ENCODE measurements at regions of chr2 and their contacts with region 1.

Region 1: GRCh38 chr2:38750891-38751595 is at the start of gene SRSF7:
- DNase-seq: peak; percentile 91 to 99 (median 95)
- ATAC-seq: peak; percentile 86
- H3K4me3 ChIP-seq: peak within 1 kb of the TSS; percentile 82
- H3K27ac ChIP-seq: peak within 1 kb of the TSS; percentile 99
- H3K4me1 ChIP-seq: peaks cover 0 to 29% of the 10 kb centered on the region in 2 experiments; a peak in 3 of 5 replicates
- H3K27me3 ChIP-seq: no peaks in the 10 kb centered on the region
- CTCF ChIP-seq: no peak
- EP300 ChIP-seq: peak; percentile 25
- POLR2A ChIP-seq: peak; percentile 100
- RAD21 ChIP-seq: peak in 1 of 2 experiments; percentile 16; a peak in 2 of 4 replicates
- polyA plus RNA-seq, gene SRSF7: 696 to 706 TPM

Region 2: DNA sequence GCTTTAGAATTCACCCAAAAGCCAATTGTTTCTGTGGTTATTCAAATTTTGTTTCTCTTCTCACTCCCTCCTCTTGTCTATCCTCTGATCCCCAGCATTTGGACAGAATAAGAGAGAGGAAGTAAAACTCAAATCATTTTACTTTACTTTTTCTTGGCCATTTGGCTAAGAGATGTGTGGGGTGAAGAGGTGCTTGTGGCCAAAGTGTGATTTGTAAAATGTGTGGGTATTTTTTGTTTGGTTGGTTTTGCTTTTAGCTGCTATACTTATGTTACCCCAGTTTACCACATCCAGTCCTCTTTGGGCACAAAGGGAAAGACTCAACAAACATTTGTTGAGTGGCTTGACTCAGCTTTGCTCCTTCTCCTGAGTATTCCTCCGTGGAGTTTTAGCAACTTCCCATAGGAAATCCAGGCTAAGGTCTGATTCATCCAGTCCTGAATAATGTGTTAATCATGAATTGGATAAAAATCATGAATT is 566.0 kb before region 1 on chr2:
- CTCF ChIA-PET with region 1: no interaction called
- POLR2A ChIA-PET with region 1: no interaction called
- in situ Hi-C with region 1: no loop called
- intact Hi-C with region 1: no loop called
- DNase-seq: no peak
- ATAC-seq: no peak
- H3K4me3 ChIP-seq: no peak overlapping the region
- H3K27ac ChIP-seq: no peak overlapping the region
- H3K4me1 ChIP-seq: no peaks in the 10 kb centered on the region
- H3K27me3 ChIP-seq: peaks cover 3 to 17% of the 10 kb centered on the region in 2 experiments; a peak in 4 of 5 replicates
- CTCF ChIP-seq: no peak
- EP300 ChIP-seq: no peak
- POLR2A ChIP-seq: no peak
- RAD21 ChIP-seq: no peak

Region 3: DNA sequence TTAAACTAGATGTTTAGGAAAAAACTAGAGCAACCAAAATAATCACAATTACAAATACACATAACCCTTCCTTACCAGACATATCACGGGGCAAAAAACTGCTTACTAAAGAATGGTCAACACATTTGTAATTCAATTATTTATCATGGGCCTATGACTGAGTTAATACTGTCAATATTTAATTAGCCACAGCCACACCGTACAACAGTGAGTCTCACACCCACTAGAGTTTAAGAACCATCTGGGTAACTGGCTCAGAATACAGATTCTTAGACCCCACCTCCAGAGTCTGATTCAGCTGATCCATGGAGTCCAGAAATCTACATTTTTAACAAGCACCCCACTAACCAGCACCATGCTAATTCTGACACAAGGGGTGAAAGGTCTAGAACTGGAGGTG is 388.8 kb before region 1 on chr2:
- CTCF ChIA-PET with region 1: no interaction called
- POLR2A ChIA-PET with region 1: interaction called, 11 read pairs
- in situ Hi-C with region 1: no loop called
- intact Hi-C with region 1: no loop called
- DNase-seq: no peak
- ATAC-seq: no peak
- H3K4me3 ChIP-seq: no peak overlapping the region
- H3K27ac ChIP-seq: no peak overlapping the region
- H3K4me1 ChIP-seq: peaks cover 22 to 45% of the 10 kb centered on the region in 2 experiments
- H3K27me3 ChIP-seq: no peaks in the 10 kb centered on the region
- CTCF ChIP-seq: no peak
- EP300 ChIP-seq: no peak
- POLR2A ChIP-seq: no peak
- RAD21 ChIP-seq: no peak

Region 4: DNA sequence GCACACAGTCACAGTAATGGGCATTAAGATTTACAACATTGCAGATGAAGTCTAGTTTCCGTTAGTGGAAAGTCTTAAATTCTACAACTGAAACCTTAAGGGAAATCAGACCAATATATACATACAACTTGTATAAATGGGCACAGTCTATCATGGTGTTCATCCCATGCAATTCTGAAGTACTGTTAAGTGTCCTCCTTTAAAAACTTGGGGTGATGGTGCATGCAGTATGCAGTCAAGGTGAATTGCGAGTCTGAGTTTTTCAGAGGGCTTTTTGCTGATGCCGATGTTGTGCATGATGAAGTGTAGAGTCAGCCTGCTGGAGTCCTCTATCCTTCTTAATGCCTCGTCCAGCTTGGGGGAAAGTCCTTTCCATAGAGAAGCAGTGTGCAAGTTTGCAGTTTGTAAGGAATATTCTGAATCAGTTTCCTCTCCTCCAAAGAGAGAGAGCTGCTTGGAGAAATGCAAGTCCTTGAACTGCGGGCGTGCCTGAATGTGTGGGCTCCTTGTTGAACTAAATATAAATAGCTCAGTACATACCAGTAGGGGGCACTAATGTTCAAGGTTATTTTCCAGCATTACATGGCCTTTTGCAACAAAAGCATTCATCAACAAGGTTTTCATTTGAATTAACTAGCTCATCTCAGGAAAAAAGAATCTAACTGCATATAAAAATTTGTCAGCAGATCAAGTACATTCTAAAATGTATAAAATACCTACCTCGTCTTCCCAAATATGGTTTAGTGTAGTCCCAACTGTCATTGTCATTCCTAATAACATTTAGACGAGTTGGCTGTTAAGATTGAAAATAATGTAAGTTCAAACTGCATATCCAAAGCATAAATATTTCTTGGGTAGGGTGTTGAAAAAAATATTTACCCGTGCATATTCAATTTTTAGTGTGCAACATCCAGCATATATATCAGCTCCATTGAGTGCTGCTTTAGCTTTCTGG is 169.6 kb before region 1 on chr2:
- CTCF ChIA-PET with region 1: no interaction called
- POLR2A ChIA-PET with region 1: interaction called, 13 read pairs
- in situ Hi-C with region 1: no loop called
- intact Hi-C with region 1: no loop called
- DNase-seq: peak; percentile 24 to 82 (median 38)
- ATAC-seq: peak; percentile 84
- H3K4me3 ChIP-seq: no peak overlapping the region
- H3K27ac ChIP-seq: no peak overlapping the region
- H3K4me1 ChIP-seq: no peaks in the 10 kb centered on the region
- H3K27me3 ChIP-seq: no peaks in the 10 kb centered on the region
- CTCF ChIP-seq: peak; percentile 52 to 80 (median 66)
- EP300 ChIP-seq: no peak; the same call in 1 of the 2 replicates
- POLR2A ChIP-seq: no peak
- RAD21 ChIP-seq: peak; percentile 79 to 83

Region 5: DNA sequence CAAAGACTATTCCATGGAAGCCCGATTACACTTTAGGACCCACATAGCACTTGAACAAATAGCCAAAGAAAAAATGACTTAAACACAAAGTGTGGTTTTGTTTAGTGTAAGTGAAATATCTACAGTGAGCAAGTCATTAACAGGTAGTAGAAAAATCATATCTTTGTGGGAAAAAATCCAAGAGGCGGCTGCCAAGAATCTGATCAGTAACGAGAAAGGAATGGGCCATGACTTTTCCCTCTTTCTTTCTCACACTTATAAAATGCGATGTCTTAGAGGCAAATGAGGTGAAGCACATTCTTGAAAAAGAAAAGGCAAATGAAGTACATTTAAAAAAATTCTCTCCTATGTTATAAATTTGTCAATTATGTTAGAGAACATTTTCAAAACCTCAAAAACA is 14.1 kb after region 1 on chr2:
- CTCF ChIA-PET with region 1: no interaction called
- POLR2A ChIA-PET with region 1: interaction called, 107 read pairs
- in situ Hi-C with region 1: no loop called
- intact Hi-C with region 1: no loop called
- DNase-seq: no peak
- ATAC-seq: no peak
- H3K4me3 ChIP-seq: no peak overlapping the region
- H3K27ac ChIP-seq: no peak overlapping the region
- H3K4me1 ChIP-seq: no peaks in the 10 kb centered on the region
- H3K27me3 ChIP-seq: no peaks in the 10 kb centered on the region
- CTCF ChIP-seq: no peak
- EP300 ChIP-seq: no peak
- POLR2A ChIP-seq: no peak
- RAD21 ChIP-seq: no peak

Region 6: DNA sequence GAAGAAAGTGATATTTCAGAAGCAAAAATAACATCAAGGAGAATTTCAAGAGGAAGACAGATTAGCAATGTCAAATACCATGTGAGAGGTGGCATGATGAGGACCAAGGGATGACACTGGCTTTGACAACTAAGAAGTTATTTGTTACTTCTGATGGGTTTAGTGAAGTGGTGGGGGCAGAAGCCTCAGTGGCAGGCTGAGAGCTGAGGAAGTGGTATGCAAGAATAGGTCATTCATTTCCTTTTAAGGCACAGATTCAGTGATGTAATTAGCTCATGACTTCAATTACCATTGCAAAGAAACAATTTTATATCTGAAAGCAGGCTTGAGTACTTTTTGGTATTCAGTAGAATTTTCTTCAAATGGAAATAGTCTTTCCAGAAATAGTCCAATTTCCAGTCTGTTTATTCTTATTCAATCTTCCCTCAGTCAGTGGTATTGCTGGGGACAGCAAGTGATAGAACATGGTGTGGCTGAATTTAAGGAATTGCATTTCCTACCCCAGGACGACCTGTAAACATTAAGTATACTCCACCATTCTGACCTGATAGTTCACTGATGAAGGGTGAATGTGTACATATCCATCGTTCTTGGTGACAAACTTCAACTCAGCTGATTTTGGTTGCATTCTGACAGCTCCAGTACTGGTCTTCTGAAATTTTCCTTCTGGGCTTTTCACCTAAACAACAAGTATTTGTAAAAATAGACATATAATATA is 55.1 kb after region 1 on chr2:
- CTCF ChIA-PET with region 1: no interaction called
- POLR2A ChIA-PET with region 1: interaction called, 12 read pairs
- in situ Hi-C with region 1: no loop called
- intact Hi-C with region 1: no loop called
- DNase-seq: no peak
- ATAC-seq: no peak
- H3K4me3 ChIP-seq: no peak overlapping the region
- H3K27ac ChIP-seq: no peak overlapping the region
- H3K4me1 ChIP-seq: no peaks in the 10 kb centered on the region
- H3K27me3 ChIP-seq: no peaks in the 10 kb centered on the region
- CTCF ChIP-seq: no peak
- EP300 ChIP-seq: no peak
- POLR2A ChIP-seq: no peak
- RAD21 ChIP-seq: no peak

Region 7: GRCh38 chr2:38875576-38876367 is 124.7 kb after region 1 on chr2 and contains the starts of genes DHX57 and MORN2:
- CTCF ChIA-PET with region 1: no interaction called
- POLR2A ChIA-PET with region 1: interaction called, 23 read pairs
- in situ Hi-C with region 1: no loop called
- intact Hi-C with region 1: no loop called
- DNase-seq: peak; percentile 90 to 96 (median 94)
- ATAC-seq: peak; percentile 100
- H3K4me3 ChIP-seq: peak within 1 kb of the TSS; percentile 62
- H3K27ac ChIP-seq: peak within 1 kb of the TSS; percentile 42
- H3K4me1 ChIP-seq: peaks cover 0 to 10% of the 10 kb centered on the region in 2 experiments; a peak in 2 of 5 replicates
- H3K27me3 ChIP-seq: no peaks in the 10 kb centered on the region
- CTCF ChIP-seq: no peak
- EP300 ChIP-seq: no peak
- POLR2A ChIP-seq: peak; percentile 76
- RAD21 ChIP-seq: no peak
- polyA plus RNA-seq, gene DHX57: 7.4 to 10.2 TPM
- polyA plus RNA-seq, gene MORN2: 35.4 to 39.5 TPM

Region 8: DNA sequence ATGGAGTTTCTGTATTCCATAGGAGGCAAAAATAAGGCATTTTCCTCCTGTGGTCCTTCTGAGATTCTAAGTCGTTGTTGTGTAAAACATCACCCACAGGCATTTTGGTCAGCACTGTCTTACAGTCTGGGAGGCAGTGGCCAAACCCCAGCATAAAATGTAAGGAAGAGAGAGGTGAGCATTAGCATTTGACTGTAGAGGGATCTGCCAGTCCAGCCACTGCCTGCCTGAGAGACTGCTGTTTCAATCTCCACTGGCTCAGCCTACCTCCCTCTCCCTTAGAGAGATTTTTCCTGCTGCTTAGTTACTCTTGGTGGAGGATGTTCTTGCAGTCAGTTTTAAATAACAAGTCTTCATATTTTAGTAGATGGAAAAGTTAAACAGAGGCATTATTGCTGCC is 215.6 kb after region 1 on chr2:
- CTCF ChIA-PET with region 1: no interaction called
- POLR2A ChIA-PET with region 1: no interaction called
- in situ Hi-C with region 1: no loop called
- intact Hi-C with region 1: no loop called
- DNase-seq: no peak
- ATAC-seq: no peak; the same call in 1 of the 3 replicates
- H3K4me3 ChIP-seq: no peak overlapping the region
- H3K27ac ChIP-seq: no peak overlapping the region
- H3K4me1 ChIP-seq: no peaks in the 10 kb centered on the region
- H3K27me3 ChIP-seq: peaks cover 35 to 36% of the 10 kb centered on the region in 2 experiments; a peak in 4 of 5 replicates
- CTCF ChIP-seq: no peak
- EP300 ChIP-seq: no peak
- POLR2A ChIP-seq: no peak
- RAD21 ChIP-seq: no peak

Measured in K562 (cell line).